Dorsolateral prefrontal cortex (tissue), 120 donors: ENCODE measurements at regions of chr6 and their contacts with region 1.

Region 1: DNA sequence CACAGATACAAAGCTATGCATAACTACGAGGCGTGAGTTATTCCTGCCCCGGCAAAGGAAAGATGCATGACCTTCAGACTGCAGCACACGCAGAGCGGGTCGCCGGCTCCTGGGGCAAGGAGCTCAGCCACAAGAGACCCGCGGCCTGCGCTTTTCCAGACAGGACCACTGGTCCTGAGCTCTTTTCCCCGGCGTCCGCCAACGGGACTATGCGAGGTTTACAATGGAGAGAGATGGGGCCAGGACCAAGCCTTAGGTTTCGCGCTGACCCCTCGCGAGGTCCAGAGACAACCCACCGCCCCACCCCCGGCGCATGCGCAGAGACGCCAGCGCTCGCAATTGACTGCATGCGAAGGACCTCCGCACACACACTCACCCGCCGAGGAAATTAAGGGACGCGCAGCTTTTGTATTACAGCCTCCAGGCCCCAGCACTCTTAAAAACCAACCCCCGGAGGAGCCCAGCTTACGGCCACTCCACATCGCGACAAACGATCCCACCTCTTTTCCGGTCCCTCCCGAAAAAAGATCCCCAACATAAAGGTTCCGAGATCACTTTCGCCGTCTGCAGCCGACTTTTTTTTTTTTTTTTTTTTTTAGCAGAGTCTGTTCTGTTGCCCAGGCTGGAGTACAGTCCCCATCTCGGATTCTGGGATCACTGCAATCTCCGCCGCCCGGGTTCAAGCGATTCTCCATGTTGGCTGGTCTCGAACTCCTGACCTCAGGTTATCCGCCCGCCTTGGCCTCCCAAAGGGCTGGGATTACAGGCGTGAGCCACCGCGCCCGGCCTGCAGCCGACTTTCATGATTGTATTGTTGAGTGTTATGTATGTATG is at the start of gene COQ3:
- DNase-seq: peak; percentile 58 to 78 (median 69)
- H3K4me3 ChIP-seq: peak within 1 kb of the TSS; percentile 63 to 99 (median 83)
- H3K27ac ChIP-seq: peak within 1 kb of the TSS; percentile 36 to 96 (median 87)
- H3K27me3 ChIP-seq: no peaks in the 10 kb centered on the region
- CTCF ChIP-seq: peak in 14 of 56 donors; percentile 3 to 34 (median 26)
- total RNA-seq, gene COQ3: 3.5 to 21.5 (median 11.5) TPM

Region 2: DNA sequence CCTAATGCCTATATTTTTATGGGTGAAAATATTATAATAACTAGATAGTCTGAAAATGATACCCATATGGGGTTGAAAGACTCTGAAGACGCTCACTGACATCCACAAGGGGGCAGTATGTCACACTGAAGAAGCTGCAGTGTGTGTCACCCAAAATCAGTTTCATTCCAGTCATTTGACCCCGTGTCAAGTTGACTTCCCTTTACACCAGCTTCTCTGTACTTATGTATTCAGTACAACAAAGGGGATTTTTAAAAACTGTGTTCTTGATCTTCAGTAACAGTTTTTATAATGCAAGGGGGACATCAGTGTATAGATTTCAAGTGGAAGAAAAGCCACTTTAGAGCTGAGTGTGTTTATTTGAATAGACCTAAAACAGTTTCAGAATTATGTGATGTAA is 63.8 kb before region 1 on chr6:
- intact Hi-C with region 1: loop called (anchors 5 to 10 kb)
- DNase-seq: peak in 4 of 10 donors; percentile 19 to 59 (median 40)
- H3K4me3 ChIP-seq: no peak overlapping the region
- H3K27ac ChIP-seq: no peak overlapping the region
- H3K27me3 ChIP-seq: no peaks in the 10 kb centered on the region
- CTCF ChIP-seq: peak; percentile 29 to 84 (median 76)